B cell (primary cell): ENCODE measurements at regions of chr4 and their contacts with region 1.

Region 1: DNA sequence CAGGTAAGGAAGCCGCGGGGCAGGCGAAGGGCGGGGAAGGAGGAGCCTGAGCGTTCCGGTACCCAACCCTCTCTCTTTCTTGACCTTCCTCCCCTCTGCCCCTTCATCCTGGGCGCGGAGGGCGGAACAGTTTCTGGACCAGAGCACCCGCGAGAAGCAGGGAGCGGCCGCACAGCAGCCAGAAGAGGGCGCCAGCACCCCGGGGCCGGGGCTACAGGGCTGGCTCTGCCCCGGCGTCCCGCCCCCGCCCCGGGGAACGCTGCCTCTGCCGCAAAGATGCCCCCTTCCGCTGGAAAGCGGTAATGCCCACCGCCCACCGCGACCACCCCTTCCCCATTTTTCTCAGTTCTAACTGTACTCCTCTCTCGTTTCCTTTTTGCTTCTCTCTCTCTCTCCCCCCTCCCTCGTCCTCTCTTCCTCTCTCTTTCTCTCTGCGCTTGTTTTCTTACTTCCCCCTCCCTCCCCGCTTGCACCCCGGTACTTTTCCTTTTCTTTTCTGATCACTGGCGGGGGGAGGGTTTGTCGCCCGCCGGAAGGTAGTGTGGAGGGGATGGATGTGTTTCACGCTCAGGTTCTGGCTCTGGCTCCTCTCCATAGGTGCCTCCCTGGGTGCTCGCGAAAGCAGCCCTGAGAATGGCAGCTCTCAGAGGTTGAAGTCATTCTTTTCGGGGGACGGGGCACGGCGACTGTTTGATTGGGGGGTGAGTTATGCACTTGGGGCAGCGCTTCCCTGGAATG is 13.1 kb upstream of the PRDM8 start:
- DNase-seq: peak; percentile 94
- ATAC-seq: peak; percentile 79
- H3K4me3 ChIP-seq: peak overlapping the region; percentile 64 to 99 (median 91)
- H3K4me3 Mint-ChIP-seq: peak overlapping the region; percentile 99
- H3K27ac ChIP-seq: peak overlapping the region; percentile 80 to 82
- H3K27ac Mint-ChIP-seq: peak overlapping the region; percentile 98
- H3K4me1 ChIP-seq: peaks cover 39 to 42% of the 10 kb centered on the region in 2 donors
- H3K4me1 Mint-ChIP-seq: peaks cover 56% of the 10 kb centered on the region
- H3K27me3 ChIP-seq: peaks cover 0 to 26% (median 0%) of the 10 kb centered on the region in 4 experiments
- H3K27me3 Mint-ChIP-seq: peaks cover 3% of the 10 kb centered on the region
- CTCF ChIP-seq: peak; percentile 100

Region 2: DNA sequence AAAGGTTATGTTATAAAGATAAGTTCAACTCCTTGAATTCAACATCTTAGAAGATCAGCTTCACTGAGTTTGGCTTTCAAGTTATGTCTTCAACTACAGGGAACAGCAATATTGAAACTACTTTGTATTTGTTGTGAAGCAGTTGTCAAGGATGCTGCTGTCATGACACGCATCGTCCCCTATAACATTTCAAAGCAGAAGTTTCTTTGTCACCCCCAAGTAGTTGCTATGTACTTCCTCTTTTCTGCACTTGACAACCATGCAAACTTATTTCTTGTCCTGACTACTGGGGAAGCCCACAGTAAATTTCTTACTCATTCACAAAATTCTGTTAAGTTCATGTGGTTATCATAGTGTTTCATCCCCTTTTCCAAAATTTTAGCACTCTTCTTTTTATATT is 125.5 kb before region 1 on chr4:
- CTCF ChIA-PET with region 1: interaction called, 6 read pairs
- POLR2A ChIA-PET with region 1: no interaction called
- intact Hi-C with region 1: loop called (anchors 1 kb)
- DNase-seq: peak; percentile 94
- ATAC-seq: peak; percentile 93
- H3K4me3 ChIP-seq: peak overlapping the region in 2 of 5 experiments; percentile 10 to 33
- H3K4me3 Mint-ChIP-seq: peak overlapping the region; percentile 79
- H3K27ac ChIP-seq: peak overlapping the region; percentile 91 to 100
- H3K27ac Mint-ChIP-seq: peak overlapping the region; percentile 98
- H3K4me1 ChIP-seq: peaks cover 14 to 17% of the 10 kb centered on the region in 2 donors
- H3K4me1 Mint-ChIP-seq: peaks cover 36% of the 10 kb centered on the region
- H3K27me3 ChIP-seq: no peaks in the 10 kb centered on the region
- H3K27me3 Mint-ChIP-seq: no peaks in the 10 kb centered on the region
- CTCF ChIP-seq: no peak

Region 3: DNA sequence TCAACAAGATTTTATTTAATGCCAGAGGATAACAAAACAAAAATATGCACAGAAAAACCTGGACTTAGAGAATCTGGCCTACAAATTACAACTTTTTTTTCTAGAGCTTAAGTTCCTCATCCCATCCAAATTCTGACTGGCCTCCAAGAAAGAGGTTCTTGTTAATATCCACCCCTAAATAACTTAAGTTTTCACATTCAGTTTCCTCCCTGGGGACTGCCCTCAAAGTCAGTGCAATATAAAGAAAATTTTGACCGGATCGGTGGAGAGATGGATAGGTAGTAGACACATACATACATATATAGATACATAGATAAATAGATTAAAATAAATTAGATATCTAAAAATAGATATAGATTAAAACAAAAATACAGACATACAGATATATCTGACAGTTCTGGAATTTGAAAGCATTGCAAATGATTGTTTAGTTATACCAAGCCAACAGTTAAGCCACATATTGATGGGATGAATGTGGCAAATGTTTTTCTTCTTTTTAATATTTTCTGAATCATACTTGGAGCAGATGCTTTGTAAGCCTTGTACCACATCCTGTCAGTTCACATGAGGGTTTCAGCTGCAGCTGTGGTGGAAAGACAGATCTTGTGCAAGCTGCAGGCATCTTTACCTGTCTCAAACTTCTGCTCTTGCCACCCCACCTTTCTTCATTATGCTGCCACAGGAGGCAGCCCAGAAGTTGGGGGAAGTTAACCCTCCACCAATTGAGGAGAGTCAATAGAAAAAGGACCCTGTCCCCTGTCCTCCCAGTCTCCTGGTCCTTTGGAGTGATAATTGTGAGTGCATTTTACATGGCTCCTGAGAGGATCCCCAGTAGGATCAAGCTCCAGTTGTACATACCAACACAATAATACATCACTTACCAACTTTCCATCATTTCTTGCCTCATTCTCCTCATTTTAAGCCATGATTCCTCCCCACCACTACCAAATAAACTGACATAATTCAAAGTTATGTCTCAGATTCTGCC is 45.4 kb before region 1 on chr4:
- CTCF ChIA-PET with region 1: interaction called, 15 read pairs
- POLR2A ChIA-PET with region 1: no interaction called
- intact Hi-C with region 1: loop called (anchors 5 kb)
- DNase-seq: peak; percentile 39
- ATAC-seq: peak; percentile 66
- H3K4me3 ChIP-seq: no peak overlapping the region
- H3K4me3 Mint-ChIP-seq: peak overlapping the region; percentile 7
- H3K27ac ChIP-seq: no peak overlapping the region
- H3K27ac Mint-ChIP-seq: peak overlapping the region; percentile 34
- H3K4me1 ChIP-seq: peaks cover 12 to 29% of the 10 kb centered on the region in 2 donors
- H3K4me1 Mint-ChIP-seq: peaks cover 35% of the 10 kb centered on the region
- H3K27me3 ChIP-seq: no peaks in the 10 kb centered on the region
- H3K27me3 Mint-ChIP-seq: no peaks in the 10 kb centered on the region
- CTCF ChIP-seq: no peak

Region 4: GRCh38 chr4:80196922-80197573 is 12.8 kb after region 1 on chr4 and contains the start of gene PRDM8:
- CTCF ChIA-PET with region 1: interaction called, 195 read pairs
- POLR2A ChIA-PET with region 1: interaction called, 19 read pairs
- intact Hi-C with region 1: loop called (anchors 1 kb)
- DNase-seq: peak; percentile 63
- ATAC-seq: peak; percentile 31
- H3K4me3 ChIP-seq: peak within 1 kb of the TSS; percentile 8 to 58 (median 41)
- H3K4me3 Mint-ChIP-seq: peak within 1 kb of the TSS; percentile 79
- H3K27ac ChIP-seq: no peak within 1 kb of the TSS
- H3K27ac Mint-ChIP-seq: peak within 1 kb of the TSS; percentile 72
- H3K4me1 ChIP-seq: peaks cover 33 to 37% of the 10 kb centered on the region in 2 donors
- H3K4me1 Mint-ChIP-seq: peaks cover 40% of the 10 kb centered on the region
- H3K27me3 ChIP-seq: peaks cover 0 to 54% (median 12%) of the 10 kb centered on the region in 4 experiments
- H3K27me3 Mint-ChIP-seq: peaks cover 23% of the 10 kb centered on the region
- CTCF ChIP-seq: no peak
- total RNA-seq, gene PRDM8: 30.1 and 35.6 TPM in 2 replicates

Region 5: GRCh38 chr4:80215449-80216052 is 31.3 kb after region 1 on chr4:
- CTCF ChIA-PET with region 1: interaction called, 32 read pairs
- POLR2A ChIA-PET with region 1: interaction called, 4 read pairs
- intact Hi-C with region 1: loop called (anchors 1 kb)
- DNase-seq: peak; percentile 54
- ATAC-seq: peak; percentile 33
- H3K4me3 ChIP-seq: no peak overlapping the region
- H3K4me3 Mint-ChIP-seq: no peak overlapping the region
- H3K27ac ChIP-seq: no peak overlapping the region
- H3K27ac Mint-ChIP-seq: no peak overlapping the region
- H3K4me1 ChIP-seq: no peaks in the 10 kb centered on the region
- H3K4me1 Mint-ChIP-seq: peaks cover 1% of the 10 kb centered on the region
- H3K27me3 ChIP-seq: peaks cover 0 to 9% (median 3%) of the 10 kb centered on the region in 4 experiments
- H3K27me3 Mint-ChIP-seq: peaks cover 20% of the 10 kb centered on the region
- CTCF ChIP-seq: peak; percentile 84